Dorsolateral prefrontal cortex (tissue), 120 donors: ENCODE measurements at regions of chr7 and their contacts with region 1.

Region 1: GRCh38 chr7:139075031-139075652 is 34.4 kb downstream of the ZC3HAV1 start:
- DNase-seq: peak in 8 of 10 donors; percentile 30 to 67 (median 47)
- H3K4me3 ChIP-seq: peak overlapping the region in 7 of 59 donors; percentile 25 to 42 (median 28)
- H3K27ac ChIP-seq: peak overlapping the region in 2 of 59 donors; percentile 22 to 39
- H3K27me3 ChIP-seq: no peaks in the 10 kb centered on the region
- CTCF ChIP-seq: peak; percentile 76 to 98 (median 88)

Region 2: GRCh38 chr7:138886501-138886917 is 188.6 kb before region 1 on chr7:
- intact Hi-C with region 1: loop called in 1 of 2 experiments (anchors 10 kb)
- DNase-seq: no peak
- H3K4me3 ChIP-seq: no peak overlapping the region
- H3K27ac ChIP-seq: no peak overlapping the region
- H3K27me3 ChIP-seq: no peaks in the 10 kb centered on the region
- CTCF ChIP-seq: peak; percentile 33 to 74 (median 61)

Region 3: GRCh38 chr7:138900035-138900828 is 174.9 kb before region 1 on chr7:
- intact Hi-C with region 1: loop called in 1 of 2 experiments (anchors 10 kb)
- DNase-seq: no peak
- H3K4me3 ChIP-seq: no peak overlapping the region
- H3K27ac ChIP-seq: no peak overlapping the region
- H3K27me3 ChIP-seq: no peaks in the 10 kb centered on the region
- CTCF ChIP-seq: no peak

Region 4: DNA sequence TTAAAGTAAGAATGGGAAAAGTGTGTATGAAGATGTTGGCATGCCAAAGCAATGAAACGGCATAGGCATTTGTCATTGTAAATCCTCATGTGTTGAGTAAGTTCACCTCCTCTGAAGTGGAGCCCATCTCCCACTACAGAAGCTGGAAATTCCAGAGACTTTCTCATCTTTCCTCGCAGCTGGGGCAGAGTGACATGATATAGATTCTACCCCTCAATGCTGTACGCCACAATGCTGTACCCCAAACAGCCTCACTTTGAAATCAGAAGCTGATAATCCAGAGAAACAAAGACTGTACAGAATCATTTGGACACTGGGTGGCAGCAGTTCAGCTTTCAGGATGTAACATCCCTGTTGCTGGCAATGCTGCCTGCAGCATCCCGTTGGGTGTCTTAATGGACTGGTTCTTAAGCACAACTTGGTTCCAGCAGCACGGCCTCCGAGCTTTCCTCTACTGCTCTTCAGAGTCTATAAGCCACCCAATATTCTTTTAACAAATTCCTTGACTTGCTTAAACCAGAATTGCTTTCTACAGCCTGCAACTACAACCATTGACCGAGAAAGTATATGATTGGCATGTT is 58.1 kb before region 1 on chr7:
- intact Hi-C with region 1: loop called in 1 of 2 experiments (anchors 5 kb)
- DNase-seq: peak in 9 of 10 donors; percentile 11 to 81 (median 61)
- H3K4me3 ChIP-seq: no peak overlapping the region
- H3K27ac ChIP-seq: no peak overlapping the region
- H3K27me3 ChIP-seq: peaks cover 0 to 3% (median 0%) of the 10 kb centered on the region in 45 donors
- CTCF ChIP-seq: peak; percentile 30 to 79 (median 68)